H1 (cell line): ENCODE measurements at regions of chr11 and their contacts with region 1.

Region 1: GRCh38 chr11:17384002-17384511 is 4.4 kb downstream of the KCNJ11 start:
- DNase-seq: peak; percentile 58 to 83
- H3K4me3 ChIP-seq: no peak overlapping the region
- H3K27ac ChIP-seq: no peak overlapping the region
- H3K4me1 ChIP-seq: peaks cover 0 to 8% (median 0%) of the 10 kb centered on the region in 4 experiments; a peak in 1 of 7 replicates
- H3K27me3 ChIP-seq: peaks cover 0 to 2% (median 0%) of the 10 kb centered on the region in 4 experiments; a peak in 1 of 7 replicates
- CTCF ChIP-seq: peak; percentile 79 to 97 (median 94)
- EP300 ChIP-seq: no peak
- POLR2A ChIP-seq: no peak
- RAD21 ChIP-seq: peak; percentile 98 to 100

Region 2: DNA sequence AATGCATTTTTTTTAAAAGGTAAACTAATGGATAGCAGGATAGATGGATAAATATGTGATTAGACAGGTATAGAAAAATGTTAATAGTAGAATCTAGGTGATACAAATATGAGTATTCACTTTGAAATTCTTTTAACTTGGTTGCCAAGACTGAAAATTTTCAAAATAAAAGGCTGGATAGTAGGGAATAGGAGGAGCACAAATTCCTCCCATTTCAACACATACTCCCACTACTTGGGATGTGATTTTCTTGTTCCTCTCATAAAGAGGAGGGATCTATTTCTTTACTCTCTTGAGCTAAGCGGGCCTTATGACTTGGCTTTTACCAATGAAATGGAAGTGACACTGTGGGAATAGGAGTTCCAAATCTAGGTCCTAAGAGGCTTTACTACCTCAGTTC is 212.1 kb before region 1 on chr11:
- CTCF ChIA-PET with region 1: no interaction called
- POLR2A ChIA-PET with region 1: no interaction called
- DNase-seq: no peak
- H3K4me3 ChIP-seq: no peak overlapping the region
- H3K27ac ChIP-seq: no peak overlapping the region
- H3K4me1 ChIP-seq: peaks cover 0 to 3% (median 0%) of the 10 kb centered on the region in 4 experiments; a peak in 1 of 7 replicates
- H3K27me3 ChIP-seq: no peaks in the 10 kb centered on the region
- CTCF ChIP-seq: no peak
- EP300 ChIP-seq: no peak
- POLR2A ChIP-seq: no peak
- RAD21 ChIP-seq: no peak

Region 3: GRCh38 chr11:17300372-17300771 is 83.7 kb before region 1 on chr11:
- CTCF ChIA-PET with region 1: no interaction called
- POLR2A ChIA-PET with region 1: no interaction called
- DNase-seq: no peak
- H3K4me3 ChIP-seq: no peak overlapping the region
- H3K27ac ChIP-seq: no peak overlapping the region
- H3K4me1 ChIP-seq: no peaks in the 10 kb centered on the region
- H3K27me3 ChIP-seq: no peaks in the 10 kb centered on the region
- CTCF ChIP-seq: no peak
- EP300 ChIP-seq: no peak
- POLR2A ChIP-seq: no peak
- RAD21 ChIP-seq: no peak

Region 4: GRCh38 chr11:17366495-17366894 is 17.6 kb before region 1 on chr11:
- CTCF ChIA-PET with region 1: interaction called, 40 read pairs
- POLR2A ChIA-PET with region 1: no interaction called
- DNase-seq: no peak
- H3K4me3 ChIP-seq: no peak overlapping the region
- H3K27ac ChIP-seq: no peak overlapping the region
- H3K4me1 ChIP-seq: no peaks in the 10 kb centered on the region
- H3K27me3 ChIP-seq: no peaks in the 10 kb centered on the region; a peak in 1 of 7 replicates
- CTCF ChIP-seq: no peak
- EP300 ChIP-seq: no peak
- POLR2A ChIP-seq: no peak
- RAD21 ChIP-seq: no peak

Region 5: GRCh38 chr11:17405232-17406005 is 21.4 kb after region 1 on chr11:
- CTCF ChIA-PET with region 1: interaction called, 10 read pairs
- POLR2A ChIA-PET with region 1: interaction called, 3 read pairs
- DNase-seq: peak in 1 of 2 experiments; percentile 55
- H3K4me3 ChIP-seq: no peak overlapping the region
- H3K27ac ChIP-seq: no peak overlapping the region
- H3K4me1 ChIP-seq: no peaks in the 10 kb centered on the region
- H3K27me3 ChIP-seq: no peaks in the 10 kb centered on the region
- CTCF ChIP-seq: peak; percentile 26 to 59 (median 57)
- EP300 ChIP-seq: no peak
- POLR2A ChIP-seq: no peak
- RAD21 ChIP-seq: peak; percentile 32 to 53

Region 6: GRCh38 chr11:17423533-17424310 is 39.7 kb after region 1 on chr11:
- CTCF ChIA-PET with region 1: interaction called, 20 read pairs
- POLR2A ChIA-PET with region 1: interaction called, 3 read pairs
- DNase-seq: no peak
- H3K4me3 ChIP-seq: no peak overlapping the region
- H3K27ac ChIP-seq: no peak overlapping the region
- H3K4me1 ChIP-seq: peaks cover 0 to 5% (median 2%) of the 10 kb centered on the region in 4 experiments; a peak in 2 of 7 replicates
- H3K27me3 ChIP-seq: no peaks in the 10 kb centered on the region
- CTCF ChIP-seq: no peak
- EP300 ChIP-seq: no peak
- POLR2A ChIP-seq: no peak
- RAD21 ChIP-seq: no peak

Region 7: GRCh38 chr11:17463531-17464194 is 79.6 kb after region 1 on chr11:
- CTCF ChIA-PET with region 1: interaction called, 11 read pairs
- POLR2A ChIA-PET with region 1: no interaction called
- DNase-seq: no peak
- H3K4me3 ChIP-seq: no peak overlapping the region
- H3K27ac ChIP-seq: no peak overlapping the region
- H3K4me1 ChIP-seq: no peaks in the 10 kb centered on the region
- H3K27me3 ChIP-seq: no peaks in the 10 kb centered on the region
- CTCF ChIP-seq: no peak
- EP300 ChIP-seq: no peak
- POLR2A ChIP-seq: no peak
- RAD21 ChIP-seq: no peak

Region 8: GRCh38 chr11:17504330-17505107 is 120.5 kb after region 1 on chr11:
- CTCF ChIA-PET with region 1: interaction called, 1,414 read pairs
- POLR2A ChIA-PET with region 1: no interaction called
- DNase-seq: peak in 1 of 2 experiments; percentile 93
- H3K4me3 ChIP-seq: no peak overlapping the region
- H3K27ac ChIP-seq: no peak overlapping the region
- H3K4me1 ChIP-seq: no peaks in the 10 kb centered on the region; a peak in 1 of 7 replicates
- H3K27me3 ChIP-seq: peaks cover 0 to 2% (median 0%) of the 10 kb centered on the region in 4 experiments; a peak in 1 of 7 replicates
- CTCF ChIP-seq: peak; percentile 87 to 96 (median 91)
- EP300 ChIP-seq: no peak
- POLR2A ChIP-seq: no peak
- RAD21 ChIP-seq: peak; percentile 95 to 98